IMR-90 (cell line): ENCODE measurements at regions of chr12 and their contacts with region 1.

Region 1: DNA sequence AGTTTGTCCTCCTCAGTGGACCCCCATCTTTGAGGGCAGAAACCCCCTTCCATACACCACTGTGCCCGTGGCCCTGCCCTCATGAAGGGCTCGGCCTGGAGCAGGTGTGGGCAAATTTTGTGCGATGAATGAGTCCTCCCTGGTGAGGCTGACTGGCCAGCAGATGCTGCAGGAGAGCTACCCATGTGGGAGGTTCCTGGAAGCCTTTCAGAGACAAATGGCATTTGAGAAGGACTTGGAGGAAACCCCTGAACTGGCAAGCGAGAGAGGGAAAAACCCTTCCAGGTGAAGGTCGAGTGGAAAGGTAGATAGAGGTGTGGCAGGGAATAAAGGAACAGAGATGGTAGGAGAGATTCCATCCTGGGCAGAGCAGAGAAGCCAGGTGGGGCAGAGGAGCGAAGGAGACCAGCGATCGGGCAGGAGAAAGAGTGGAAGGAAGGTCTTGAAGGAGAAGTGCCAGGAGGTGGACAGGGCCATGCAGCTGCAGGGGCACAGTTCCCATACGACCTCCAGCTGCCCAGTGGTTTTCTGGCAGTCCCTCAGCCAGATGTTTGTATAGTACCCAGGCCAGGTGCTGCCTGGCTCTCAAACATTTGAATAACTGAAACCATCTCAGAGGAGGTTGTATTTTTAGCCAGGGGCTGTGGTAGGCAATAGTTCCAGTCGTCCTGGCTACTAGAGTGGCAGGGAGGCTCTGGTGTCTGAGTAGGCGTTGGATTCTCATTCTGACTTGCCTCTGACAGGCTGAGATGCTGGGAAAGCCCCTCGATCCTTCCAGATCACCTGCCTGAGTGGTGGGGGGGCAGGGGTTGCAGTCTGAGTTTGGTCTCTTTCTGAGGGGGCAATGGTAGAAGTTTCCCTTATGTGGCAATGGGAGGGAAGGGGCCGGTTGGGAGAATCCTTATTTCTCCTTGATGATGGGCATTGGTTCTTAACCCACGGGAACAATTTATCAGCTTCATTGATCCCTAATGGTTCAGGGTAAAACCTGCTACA is 40.1 kb downstream of the FBXL14 start:
- DNase-seq: no peak
- ATAC-seq: no peak
- H3K4me3 ChIP-seq: no peak overlapping the region
- H3K27ac ChIP-seq: peak overlapping the region; percentile 17; the same call in 1 of the 2 replicates
- H3K4me1 ChIP-seq: peaks cover 26% of the 10 kb centered on the region
- H3K27me3 ChIP-seq: no peaks in the 10 kb centered on the region
- CTCF ChIP-seq: no peak
- POLR2A ChIP-seq: no peak
- RAD21 ChIP-seq: no peak

Region 2: GRCh38 chr12:1117970-1118563 is 436.2 kb before region 1 on chr12:
- CTCF ChIA-PET with region 1: no interaction called
- POLR2A ChIA-PET with region 1: no interaction called
- dilution Hi-C with region 1: loop called (anchors 25 kb)
- in situ Hi-C with region 1: no loop called
- intact Hi-C with region 1: no loop called
- DNase-seq: peak; percentile 79
- ATAC-seq: peak; percentile 78
- H3K4me3 ChIP-seq: no peak overlapping the region
- H3K27ac ChIP-seq: no peak overlapping the region
- H3K4me1 ChIP-seq: peaks cover 3% of the 10 kb centered on the region
- H3K27me3 ChIP-seq: no peaks in the 10 kb centered on the region
- CTCF ChIP-seq: peak; percentile 90
- POLR2A ChIP-seq: no peak
- RAD21 ChIP-seq: peak; percentile 94

Region 3: DNA sequence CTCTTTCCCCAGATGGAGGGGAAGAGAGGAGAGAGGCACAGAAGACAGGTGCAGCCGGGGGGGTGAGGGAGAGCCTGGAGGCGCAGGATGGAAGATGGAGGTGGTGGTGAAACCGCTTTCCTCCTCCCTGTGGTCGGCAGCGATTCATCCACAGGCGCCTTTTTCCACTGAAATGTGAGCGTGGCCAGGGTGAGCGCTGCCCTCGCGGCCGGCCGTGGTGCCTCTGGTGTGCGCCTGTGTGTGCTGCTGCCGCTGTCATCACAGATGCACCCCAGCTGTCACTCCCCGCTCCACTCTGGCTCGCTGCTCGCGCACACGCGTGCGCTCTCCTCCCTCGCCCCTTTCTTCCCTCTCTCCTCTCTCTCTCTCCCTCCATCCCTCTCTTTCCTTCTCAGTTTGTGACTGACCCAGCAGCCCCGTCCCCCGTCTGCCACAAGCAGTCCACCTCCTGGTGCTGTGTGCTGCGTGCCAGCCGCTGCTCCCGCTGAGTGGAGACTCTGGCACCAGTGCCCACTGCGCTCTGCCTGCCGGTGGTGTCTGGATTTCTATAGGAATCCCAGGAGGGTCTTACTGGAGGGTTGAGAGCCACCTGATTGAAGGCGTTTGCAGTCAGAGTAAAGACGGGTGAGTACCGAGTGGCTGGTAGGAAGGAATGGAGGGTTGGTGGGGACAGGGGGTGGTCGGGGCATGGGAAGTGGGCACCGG is 266.1 kb after region 1 on chr12 and contains the start of gene LRTM2:
- CTCF ChIA-PET with region 1: no interaction called
- POLR2A ChIA-PET with region 1: no interaction called
- dilution Hi-C with region 1: no loop called
- in situ Hi-C with region 1: no loop called
- intact Hi-C with region 1: no loop called
- DNase-seq: no peak
- ATAC-seq: peak; percentile 65
- H3K4me3 ChIP-seq: no peak within 1 kb of the TSS
- H3K27ac ChIP-seq: no peak within 1 kb of the TSS
- H3K4me1 ChIP-seq: no peaks in the 10 kb centered on the region
- H3K27me3 ChIP-seq: peaks cover 80% of the 10 kb centered on the region
- CTCF ChIP-seq: no peak
- POLR2A ChIP-seq: no peak
- RAD21 ChIP-seq: no peak
- total RNA-seq, gene LRTM2: not detected in 2 replicates